Right cardiac atrium (tissue), 5 donors: ENCODE measurements at regions of chr14 and their contacts with region 1.

Region 1: GRCh38 chr14:26984311-26985177 is 386.7 kb upstream of the NOVA1 start:
- DNase-seq: peak in 2 of 3 donors; percentile 60 to 66
- ATAC-seq: peak in 1 of 2 donors; percentile 69
- H3K4me3 ChIP-seq: no peak overlapping the region
- H3K27ac ChIP-seq: no peak overlapping the region
- H3K4me1 ChIP-seq: no peaks in the 10 kb centered on the region
- H3K27me3 ChIP-seq: no peaks in the 10 kb centered on the region

Region 2: GRCh38 chr14:26905225-26905624 is 79.3 kb before region 1 on chr14:
- intact Hi-C with region 1: loop called in 1 of 4 experiments (anchors 10 kb)
- DNase-seq: no peak
- ATAC-seq: no peak
- H3K4me3 ChIP-seq: no peak overlapping the region
- H3K27ac ChIP-seq: no peak overlapping the region
- H3K4me1 ChIP-seq: no peaks in the 10 kb centered on the region
- H3K27me3 ChIP-seq: no peaks in the 10 kb centered on the region